Dorsolateral prefrontal cortex (tissue), 120 donors: ENCODE measurements at regions of chr4 and their contacts with region 1.

Region 1: GRCh38 chr4:105146276-105147015 is at the start of gene TET2:
- DNase-seq: peak; percentile 55 to 91 (median 89)
- H3K4me3 ChIP-seq: peak within 1 kb of the TSS; percentile 56 to 96 (median 84)
- H3K27ac ChIP-seq: peak within 1 kb of the TSS; percentile 35 to 98 (median 91)
- H3K27me3 ChIP-seq: no peaks in the 10 kb centered on the region
- CTCF ChIP-seq: peak in 15 of 56 donors; percentile 4 to 41 (median 18)
- total RNA-seq, gene TET2: 15.8 to 39.0 (median 24.0) TPM

Region 2: GRCh38 chr4:105241451-105241850 is 95.0 kb after region 1 on chr4:
- intact Hi-C with region 1: loop called (anchors 5 kb)
- DNase-seq: peak; percentile 50 to 88 (median 68)
- H3K4me3 ChIP-seq: peak overlapping the region in 14 of 59 donors; percentile 5 to 41 (median 12)
- H3K27ac ChIP-seq: peak overlapping the region in 54 of 59 donors; percentile 0 to 89 (median 72)
- H3K27me3 ChIP-seq: no peaks in the 10 kb centered on the region
- CTCF ChIP-seq: peak in 3 of 56 donors; percentile 3 to 13 (median 12)

Region 3: DNA sequence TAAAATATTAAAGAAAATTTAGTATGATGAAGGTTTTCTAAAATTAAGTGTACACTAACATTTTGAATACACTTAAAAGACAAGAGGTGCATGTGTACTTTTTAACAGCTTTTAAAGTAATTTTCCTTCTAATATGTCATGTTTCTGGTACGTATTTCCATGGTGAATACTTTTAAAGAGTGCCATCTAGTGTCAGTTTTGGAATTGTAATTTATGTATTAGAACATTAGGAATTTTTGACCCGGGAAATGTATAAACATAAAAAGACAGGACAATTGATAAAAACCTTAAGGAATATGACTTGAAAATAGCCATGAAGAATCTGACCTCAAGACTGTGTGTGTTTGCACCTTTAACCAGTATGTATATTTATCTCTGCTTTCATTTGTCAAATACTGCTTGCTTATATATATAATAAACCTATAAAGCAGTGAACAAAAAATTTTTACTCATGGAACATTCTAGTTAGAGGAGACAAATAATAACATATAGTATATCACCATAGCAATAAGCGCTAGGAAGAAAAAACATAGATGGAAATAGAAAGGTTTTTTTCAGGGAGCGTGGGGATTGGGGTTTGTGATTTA is 569.3 kb after region 1 on chr4:
- intact Hi-C with region 1: loop called in 1 of 2 experiments (anchors 5 kb)
- DNase-seq: no peak
- H3K4me3 ChIP-seq: peak overlapping the region in 12 of 59 donors; percentile 0 to 42 (median 12)
- H3K27ac ChIP-seq: no peak overlapping the region
- H3K27me3 ChIP-seq: no peaks in the 10 kb centered on the region
- CTCF ChIP-seq: peak; percentile 49 to 81 (median 66)